ENCODE measurements at regions of chr11 and their contacts with region 1.

Region 1: DNA sequence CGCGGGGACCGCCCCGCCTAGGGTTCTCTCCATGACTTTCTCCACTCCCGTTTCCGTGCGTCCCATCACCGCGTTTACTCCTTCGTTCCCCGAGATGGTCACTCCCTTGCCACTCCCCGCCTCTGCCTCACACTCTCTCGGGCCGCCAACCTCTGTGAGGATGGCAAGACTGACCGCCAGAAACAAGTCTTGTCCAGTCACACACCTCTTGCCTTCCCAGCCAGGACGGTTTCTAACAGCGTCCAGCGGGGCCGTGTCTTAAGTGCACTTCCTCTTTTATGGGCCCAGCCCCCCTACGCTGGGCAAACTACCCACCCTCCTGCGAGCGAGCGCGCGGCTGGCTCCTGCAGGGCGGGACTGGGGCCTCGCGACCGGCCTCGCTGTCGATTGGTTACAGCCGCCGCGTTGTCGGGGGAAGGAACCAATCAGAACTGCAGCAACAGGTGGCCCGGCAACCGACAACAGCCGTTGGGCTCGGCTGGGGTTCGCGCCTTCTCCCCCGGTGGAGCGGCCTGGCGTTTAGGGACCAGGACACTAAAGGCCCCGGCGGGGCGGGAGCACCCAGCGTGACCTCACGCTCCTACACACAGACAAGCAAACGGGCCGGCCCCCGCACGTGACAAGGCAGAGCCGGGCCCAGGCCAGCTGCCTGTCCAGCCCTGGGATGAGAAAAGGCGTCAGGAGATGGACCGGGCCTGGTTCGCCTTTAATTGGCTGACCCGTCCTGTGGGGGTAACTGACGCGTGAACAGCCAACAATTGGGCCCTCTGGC is 512 bp upstream of the UCP2 start:
- DNase-seq: peak; percentile 74 to 91
- H3K4me3 ChIP-seq: peak overlapping the region; percentile 71 to 96 (median 79)
- H3K27ac ChIP-seq: peak overlapping the region; percentile 75
- H3K4me1 ChIP-seq: peaks cover 7 to 18% (median 10%) of the 10 kb centered on the region in 4 experiments
- H3K27me3 ChIP-seq: peaks cover 0 to 2% (median 0%) of the 10 kb centered on the region in 4 experiments; a peak in 2 of 7 replicates
- CTCF ChIP-seq: no peak
- EP300 ChIP-seq: no peak
- POLR2A ChIP-seq: peak in 1 of 2 experiments; percentile 23; a peak in 1 of 3 replicates
- RAD21 ChIP-seq: no peak

Region 2: DNA sequence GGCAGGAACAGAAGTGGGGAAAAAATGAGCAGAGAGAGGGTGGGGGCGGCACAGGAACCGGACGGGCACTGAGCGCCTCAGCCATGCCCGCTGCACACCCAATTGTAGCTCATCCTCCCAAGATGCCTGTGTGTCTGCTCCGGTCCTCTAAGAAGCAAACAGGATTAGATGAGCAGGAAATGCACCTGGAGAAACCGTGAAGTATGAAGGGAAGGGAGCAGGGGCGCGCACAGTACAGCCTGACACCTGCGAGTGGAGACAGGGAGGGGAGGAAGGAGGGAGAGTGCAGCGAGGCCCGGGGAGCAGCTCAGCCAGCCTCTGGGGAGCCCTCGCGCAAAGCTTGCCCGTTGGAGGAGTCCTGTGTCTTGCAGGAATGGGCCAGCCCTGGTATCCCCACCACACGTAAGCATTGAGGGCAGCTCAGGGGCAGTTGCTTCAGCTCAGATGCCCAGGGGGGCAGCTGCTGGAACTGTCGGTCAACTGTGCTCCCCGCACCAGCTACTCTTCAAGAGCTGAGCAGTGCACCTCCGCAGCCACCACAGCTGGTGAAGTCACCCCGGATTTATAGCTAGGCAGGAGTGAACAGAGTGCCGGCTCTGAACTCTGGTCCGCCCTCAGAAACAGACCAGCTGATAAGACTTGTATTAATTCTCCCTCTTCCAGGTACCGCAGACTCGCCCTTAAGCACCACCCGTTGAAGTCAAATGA is 25.3 kb before region 1 on chr11:
- CTCF ChIA-PET with region 1: interaction called, 22 read pairs
- POLR2A ChIA-PET with region 1: interaction called, 13 read pairs
- DNase-seq: no peak
- H3K4me3 ChIP-seq: peak overlapping the region in 1 of 4 experiments; percentile 3; a peak in 1 of 8 replicates
- H3K27ac ChIP-seq: no peak overlapping the region
- H3K4me1 ChIP-seq: no peaks in the 10 kb centered on the region; a peak in 1 of 7 replicates
- H3K27me3 ChIP-seq: no peaks in the 10 kb centered on the region
- CTCF ChIP-seq: no peak
- EP300 ChIP-seq: no peak
- POLR2A ChIP-seq: no peak
- RAD21 ChIP-seq: no peak

Region 3: GRCh38 chr11:73965076-73965860 is 17.9 kb before region 1 on chr11:
- CTCF ChIA-PET with region 1: interaction called, 22 read pairs
- POLR2A ChIA-PET with region 1: interaction called, 94 read pairs
- DNase-seq: no peak
- H3K4me3 ChIP-seq: no peak overlapping the region
- H3K27ac ChIP-seq: no peak overlapping the region
- H3K4me1 ChIP-seq: no peaks in the 10 kb centered on the region
- H3K27me3 ChIP-seq: no peaks in the 10 kb centered on the region; a peak in 1 of 7 replicates
- CTCF ChIP-seq: no peak
- EP300 ChIP-seq: no peak
- POLR2A ChIP-seq: no peak
- RAD21 ChIP-seq: no peak; a peak in 1 of 4 replicates

Region 4: GRCh38 chr11:73997120-73997770 is 14.1 kb after region 1 on chr11:
- CTCF ChIA-PET with region 1: interaction called, 5 read pairs
- POLR2A ChIA-PET with region 1: interaction called, 11 read pairs
- DNase-seq: no peak
- H3K4me3 ChIP-seq: no peak overlapping the region
- H3K27ac ChIP-seq: no peak overlapping the region
- H3K4me1 ChIP-seq: no peaks in the 10 kb centered on the region; a peak in 1 of 7 replicates
- H3K27me3 ChIP-seq: no peaks in the 10 kb centered on the region
- CTCF ChIP-seq: no peak
- EP300 ChIP-seq: no peak
- POLR2A ChIP-seq: no peak
- RAD21 ChIP-seq: no peak

Measured in H1 (cell line).